Heart right ventricle (tissue), 16 donors: ENCODE measurements at regions of chr19 and their contacts with region 1.

Region 1: DNA sequence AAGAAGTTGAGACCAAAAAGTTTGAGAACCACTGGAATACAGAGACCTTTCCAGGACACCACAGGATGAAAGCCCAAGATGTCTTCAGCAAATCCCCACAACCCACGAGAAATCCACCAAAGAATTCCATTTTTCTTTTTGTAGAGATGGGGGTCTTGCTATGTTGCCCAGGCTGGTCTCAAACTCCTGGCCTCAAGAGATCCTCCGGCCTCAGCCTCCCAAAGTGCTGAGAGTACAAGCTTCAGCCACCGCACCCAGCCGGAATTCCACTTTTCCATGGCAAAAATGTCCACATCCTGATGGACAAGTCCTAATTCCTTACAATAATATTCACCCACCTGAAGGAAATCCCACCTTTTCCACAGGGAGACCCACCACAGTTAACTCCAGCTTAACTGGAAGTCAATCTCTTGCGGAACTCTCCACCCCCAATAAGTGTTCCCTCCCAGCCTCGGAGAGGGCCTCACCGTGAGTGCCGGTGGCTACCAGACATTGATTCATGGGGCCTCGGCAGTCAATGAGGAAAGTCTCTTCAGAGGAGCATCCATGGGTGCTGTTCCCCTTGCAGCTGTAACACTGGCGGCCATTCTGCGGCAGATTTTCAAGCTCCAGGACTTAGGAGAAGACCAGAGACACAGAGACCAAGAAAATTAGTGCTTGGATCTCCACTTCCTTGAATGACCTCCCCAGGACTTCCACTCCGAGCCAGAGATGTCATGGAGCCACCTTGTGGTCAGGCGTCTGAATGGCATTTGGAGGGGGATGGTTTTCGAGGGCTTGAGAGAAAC is 12.3 kb upstream of the CADM4 start:
- DNase-seq: peak; percentile 35 to 62
- ATAC-seq: peak; percentile 59 to 83 (median 74)
- H3K4me3 ChIP-seq: peak overlapping the region in 2 of 10 donors; percentile 8 to 10
- H3K27ac ChIP-seq: no peak overlapping the region
- H3K4me1 ChIP-seq: peaks cover 0 to 6% (median 0%) of the 10 kb centered on the region in 9 donors
- H3K27me3 ChIP-seq: no peaks in the 10 kb centered on the region
- CTCF ChIP-seq: peak; percentile 48 to 86 (median 75)

Region 2: GRCh38 chr19:43446746-43447489 is 205.0 kb before region 1 on chr19:
- intact Hi-C with region 1: loop called in 6 of 10 experiments (anchors 5 to 10 kb)
- DNase-seq: peak; percentile 71 to 80
- ATAC-seq: peak in 7 of 8 donors; percentile 72 to 87 (median 87)
- H3K4me3 ChIP-seq: no peak overlapping the region
- H3K27ac ChIP-seq: no peak overlapping the region
- H3K4me1 ChIP-seq: peaks cover 0 to 17% (median 0%) of the 10 kb centered on the region in 9 donors
- H3K27me3 ChIP-seq: no peaks in the 10 kb centered on the region
- CTCF ChIP-seq: peak; percentile 91 to 98 (median 95)

Region 3: GRCh38 chr19:43532962-43533545 is 118.9 kb before region 1 on chr19 and contains the start of gene ZNF575:
- intact Hi-C with region 1: loop called in 6 of 10 experiments (anchors 2 to 10 kb)
- DNase-seq: peak; percentile 89 to 94
- ATAC-seq: peak; percentile 72 to 88 (median 80)
- H3K4me3 ChIP-seq: peak within 1 kb of the TSS; percentile 48 to 74 (median 61)
- H3K27ac ChIP-seq: peak within 1 kb of the TSS; percentile 66 to 96 (median 89)
- H3K4me1 ChIP-seq: peaks cover 0 to 35% (median 12%) of the 10 kb centered on the region in 9 donors
- H3K27me3 ChIP-seq: no peaks in the 10 kb centered on the region
- CTCF ChIP-seq: peak in 2 of 9 donors; percentile 7 to 13
- total RNA-seq, gene ZNF575: 0.45 to 2.0 (median 1.3) TPM

Region 4: GRCh38 chr19:43555185-43555770 is 96.7 kb before region 1 on chr19:
- intact Hi-C with region 1: loop called in 2 of 10 experiments (anchors 10 kb)
- DNase-seq: peak in 1 of 2 donors; percentile 69
- ATAC-seq: peak in 6 of 8 donors; percentile 38 to 62 (median 50)
- H3K4me3 ChIP-seq: no peak overlapping the region
- H3K27ac ChIP-seq: no peak overlapping the region
- H3K4me1 ChIP-seq: no peaks in the 10 kb centered on the region
- H3K27me3 ChIP-seq: no peaks in the 10 kb centered on the region
- CTCF ChIP-seq: peak in 8 of 9 donors; percentile 44 to 76 (median 62)